CD4-positive, alpha-beta T cell (primary cell): ENCODE measurements at regions of chr22 and their contacts with region 1.

Region 1: DNA sequence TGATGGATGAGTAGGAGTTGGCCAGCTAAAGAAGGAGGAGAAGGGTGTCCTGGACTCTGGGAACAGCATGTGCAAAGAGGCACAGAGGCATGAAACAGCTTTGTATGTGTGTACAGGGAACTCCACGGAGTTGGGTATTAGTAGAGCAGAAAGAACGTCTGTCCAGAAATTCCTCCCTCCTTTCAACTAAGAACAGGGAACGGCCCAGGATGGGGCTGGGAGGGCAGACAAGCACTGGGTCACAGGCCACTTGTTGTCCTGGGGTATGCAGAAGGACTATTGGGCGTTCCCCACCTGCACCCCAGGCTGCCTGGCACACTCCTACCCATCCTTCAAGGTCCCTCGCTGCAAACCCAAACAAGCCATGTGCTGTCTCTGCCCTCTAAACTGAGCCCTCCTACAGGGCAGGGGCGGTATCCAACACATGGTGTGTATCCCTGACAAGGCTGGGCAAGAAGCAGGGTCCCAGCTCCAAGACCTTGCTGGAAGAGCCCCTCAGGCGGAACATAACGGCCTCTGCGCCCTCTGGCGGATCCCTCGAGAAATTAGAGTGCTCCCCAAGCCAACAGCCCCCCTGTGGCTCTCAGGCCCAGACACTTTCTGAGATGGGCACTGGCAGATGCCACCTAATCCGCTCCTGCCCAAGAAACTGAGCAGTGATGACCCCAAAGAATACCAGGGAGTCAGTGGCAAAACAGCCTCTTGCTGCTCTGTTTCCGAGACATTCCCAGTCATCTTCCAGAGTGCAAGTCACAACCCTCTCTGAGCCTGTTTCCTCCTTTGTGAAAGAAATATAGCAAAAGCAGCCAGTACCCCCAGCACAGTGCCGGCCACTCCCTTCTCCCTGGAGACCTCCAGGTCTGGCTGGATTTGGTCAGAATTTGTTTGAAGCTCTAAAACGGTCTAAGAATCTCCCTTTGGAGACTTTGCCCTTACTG is 1.6 kb upstream of the ELFN2 start:
- DNase-seq: peak; percentile 35 to 83 (median 55)
- ATAC-seq: peak; percentile 62
- H3K4me3 ChIP-seq: no peak overlapping the region
- H3K4me3 Mint-ChIP-seq: peak overlapping the region; percentile 38
- H3K27ac ChIP-seq: no peak overlapping the region
- H3K27ac Mint-ChIP-seq: no peak overlapping the region
- H3K4me1 ChIP-seq: peaks cover 24% of the 10 kb centered on the region
- H3K4me1 Mint-ChIP-seq: no peaks in the 10 kb centered on the region
- H3K27me3 ChIP-seq: peaks cover 43 to 47% of the 10 kb centered on the region in 2 experiments
- H3K27me3 Mint-ChIP-seq: peaks cover 83% of the 10 kb centered on the region
- CTCF ChIP-seq: peak; percentile 74

Region 2: GRCh38 chr22:37176218-37177091 is 252.5 kb before region 1 on chr22:
- CTCF ChIA-PET with region 1: no interaction called
- POLR2A ChIA-PET with region 1: no interaction called
- intact Hi-C with region 1: loop called in 1 of 2 experiments (anchors 10 kb)
- DNase-seq: peak in 2 of 14 experiments; percentile 49 to 50
- ATAC-seq: peak; percentile 48
- H3K4me3 ChIP-seq: no peak overlapping the region
- H3K4me3 Mint-ChIP-seq: peak overlapping the region; percentile 4
- H3K27ac ChIP-seq: no peak overlapping the region
- H3K27ac Mint-ChIP-seq: peak overlapping the region; percentile 24
- H3K4me1 ChIP-seq: peaks cover 25% of the 10 kb centered on the region
- H3K4me1 Mint-ChIP-seq: peaks cover 25% of the 10 kb centered on the region
- H3K27me3 ChIP-seq: no peaks in the 10 kb centered on the region
- H3K27me3 Mint-ChIP-seq: no peaks in the 10 kb centered on the region
- CTCF ChIP-seq: no peak

Region 3: GRCh38 chr22:37486224-37486845 is 57.4 kb after region 1 on chr22 and contains the start of gene MFNG:
- CTCF ChIA-PET with region 1: no interaction called
- POLR2A ChIA-PET with region 1: no interaction called
- intact Hi-C with region 1: no loop called
- DNase-seq: peak; percentile 46 to 90 (median 72)
- ATAC-seq: peak; percentile 48
- H3K4me3 ChIP-seq: peak within 1 kb of the TSS; percentile 94
- H3K4me3 Mint-ChIP-seq: peak within 1 kb of the TSS; percentile 93
- H3K27ac ChIP-seq: peak within 1 kb of the TSS; percentile 87 to 88
- H3K27ac Mint-ChIP-seq: peak within 1 kb of the TSS; percentile 98
- H3K4me1 ChIP-seq: peaks cover 85% of the 10 kb centered on the region
- H3K4me1 Mint-ChIP-seq: peaks cover 77% of the 10 kb centered on the region
- H3K27me3 ChIP-seq: no peaks in the 10 kb centered on the region
- H3K27me3 Mint-ChIP-seq: no peaks in the 10 kb centered on the region
- CTCF ChIP-seq: no peak
- total RNA-seq, gene MFNG: 85.1 to 89.9 TPM

Region 4: DNA sequence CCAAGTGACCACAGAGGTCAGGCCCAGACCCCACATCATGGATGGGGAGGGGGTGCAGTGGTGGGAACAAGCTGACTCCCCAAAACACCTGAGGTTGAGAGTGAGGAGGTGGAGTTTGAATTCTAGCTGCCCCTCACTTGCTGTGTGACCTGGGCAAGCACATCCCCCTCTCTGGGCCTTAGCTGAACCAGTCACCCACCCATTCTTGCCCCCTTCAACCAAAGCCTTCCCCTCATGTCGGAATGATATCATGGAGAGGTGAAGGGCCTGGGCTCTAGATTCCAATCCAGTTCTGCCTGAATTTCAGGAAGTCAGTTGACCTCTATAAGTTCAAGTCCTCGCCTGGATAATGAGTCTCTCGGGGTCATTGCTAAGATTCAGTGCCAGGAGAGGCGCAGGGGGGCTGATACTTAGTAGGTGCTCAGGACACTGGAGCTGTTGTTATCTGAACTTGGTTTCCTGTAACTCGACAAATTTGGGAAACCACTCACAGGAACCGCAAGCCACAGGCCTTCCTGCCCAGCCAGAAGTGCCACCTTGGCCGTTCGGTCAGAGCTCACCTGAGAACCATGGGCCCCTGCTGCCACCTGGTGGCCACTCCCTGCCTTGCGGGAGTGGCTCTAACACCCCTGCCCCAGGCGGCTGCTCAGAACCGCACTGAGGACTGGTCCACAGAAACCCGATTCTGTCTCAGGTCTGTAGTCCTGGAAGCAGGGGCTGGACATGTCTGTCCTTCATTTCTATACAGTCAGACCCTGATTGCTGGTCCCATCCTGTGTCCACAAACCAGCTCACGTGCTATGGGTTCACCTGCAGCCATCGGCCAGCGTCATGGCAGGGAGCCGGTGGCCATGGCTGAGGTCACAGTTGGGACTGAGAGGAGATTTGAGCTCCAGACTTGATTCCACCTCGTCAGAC is 138.2 kb after region 1 on chr22:
- CTCF ChIA-PET with region 1: no interaction called
- POLR2A ChIA-PET with region 1: no interaction called
- intact Hi-C with region 1: no loop called
- DNase-seq: peak; percentile 79 to 96 (median 89)
- ATAC-seq: peak; percentile 90
- H3K4me3 ChIP-seq: peak overlapping the region; percentile 22
- H3K4me3 Mint-ChIP-seq: peak overlapping the region; percentile 69
- H3K27ac ChIP-seq: no peak overlapping the region
- H3K27ac Mint-ChIP-seq: no peak overlapping the region
- H3K4me1 ChIP-seq: peaks cover 28% of the 10 kb centered on the region
- H3K4me1 Mint-ChIP-seq: peaks cover 29% of the 10 kb centered on the region
- H3K27me3 ChIP-seq: peaks cover 9 to 17% of the 10 kb centered on the region in 2 experiments
- H3K27me3 Mint-ChIP-seq: peaks cover 26% of the 10 kb centered on the region
- CTCF ChIP-seq: peak; percentile 92